ENCODE measurements at regions of chr1 and their contacts with region 1.

Region 1: GRCh38 chr1:45011837-45012638 is at the start of gene UROD:
- DNase-seq: peak; percentile 92 to 94
- ATAC-seq: peak; percentile 60 to 85
- H3K4me3 ChIP-seq: peak within 1 kb of the TSS; percentile 97
- H3K27ac ChIP-seq: peak within 1 kb of the TSS; percentile 67 to 93
- H3K4me1 ChIP-seq: peaks cover 8% of the 10 kb centered on the region; the same call in 2 of the 3 replicates
- CTCF ChIP-seq: no peak
- EP300 ChIP-seq: no peak
- POLR2A ChIP-seq: peak; percentile 42
- RAD21 ChIP-seq: no peak
- polyA plus RNA-seq, gene UROD: 59.0 and 74.5 TPM in 2 replicates

Region 2: GRCh38 chr1:44799770-44800584 is 212.1 kb before region 1 on chr1 and contains the start of gene PLK3:
- CTCF ChIA-PET with region 1: interaction called, 3 read pairs
- POLR2A ChIA-PET with region 1: interaction called, 11 read pairs
- DNase-seq: peak; percentile 79 to 96
- ATAC-seq: peak; percentile 88 to 91
- H3K4me3 ChIP-seq: peak within 1 kb of the TSS; percentile 98
- H3K27ac ChIP-seq: peak within 1 kb of the TSS; percentile 91 to 95
- H3K4me1 ChIP-seq: peaks cover 34% of the 10 kb centered on the region
- CTCF ChIP-seq: peak; percentile 64
- EP300 ChIP-seq: no peak
- POLR2A ChIP-seq: peak; percentile 85
- RAD21 ChIP-seq: peak; percentile 68 to 76
- polyA plus RNA-seq, gene PLK3: 12.6 and 16.0 TPM in 2 replicates

Region 3: DNA sequence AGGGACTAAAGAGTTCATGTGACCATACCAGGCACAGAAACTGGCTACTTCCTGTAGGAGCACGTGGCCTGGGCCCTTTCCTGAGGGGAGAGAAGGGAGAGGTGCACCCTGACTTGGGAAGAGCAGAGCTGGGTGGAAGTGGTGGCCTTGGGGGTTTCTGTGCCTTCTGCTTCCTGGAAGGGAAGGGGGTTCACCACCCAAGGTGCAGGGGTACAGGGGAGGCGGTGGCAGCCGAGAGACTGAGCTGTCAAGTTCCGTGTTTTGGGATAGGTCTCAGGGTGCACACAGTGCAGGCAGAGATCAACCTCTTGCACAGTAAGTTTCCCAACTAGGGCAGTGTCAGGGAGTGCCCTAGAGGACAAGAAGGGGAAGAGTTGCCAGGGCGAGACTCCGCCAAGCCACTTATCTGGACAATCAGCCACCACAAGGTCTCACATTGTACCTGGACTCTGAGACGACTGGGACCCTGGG is 11.0 kb before region 1 on chr1:
- CTCF ChIA-PET with region 1: interaction called, 23 read pairs
- POLR2A ChIA-PET with region 1: no interaction called
- DNase-seq: no peak
- ATAC-seq: peak; percentile 60 to 70; a peak in 4 of 6 replicates
- H3K4me3 ChIP-seq: no peak overlapping the region
- H3K27ac ChIP-seq: no peak overlapping the region
- H3K4me1 ChIP-seq: no peaks in the 10 kb centered on the region
- CTCF ChIP-seq: no peak
- EP300 ChIP-seq: no peak
- POLR2A ChIP-seq: no peak
- RAD21 ChIP-seq: no peak

Region 4: GRCh38 chr1:45319761-45320160 is 307.7 kb after region 1 on chr1:
- CTCF ChIA-PET with region 1: interaction called, 10 read pairs
- POLR2A ChIA-PET with region 1: no interaction called
- DNase-seq: no peak
- ATAC-seq: no peak
- H3K4me3 ChIP-seq: no peak overlapping the region
- H3K27ac ChIP-seq: no peak overlapping the region
- H3K4me1 ChIP-seq: no peaks in the 10 kb centered on the region
- CTCF ChIP-seq: no peak
- EP300 ChIP-seq: no peak
- POLR2A ChIP-seq: no peak
- RAD21 ChIP-seq: no peak

Region 5: GRCh38 chr1:45490626-45491486 is 478.8 kb after region 1 on chr1 and contains the start of gene TESK2:
- CTCF ChIA-PET with region 1: interaction called, 56 read pairs
- POLR2A ChIA-PET with region 1: interaction called, 4 read pairs
- DNase-seq: peak; percentile 93 to 99
- ATAC-seq: peak; percentile 92 to 97
- H3K4me3 ChIP-seq: peak within 1 kb of the TSS; percentile 57
- H3K27ac ChIP-seq: peak within 1 kb of the TSS; percentile 18 to 68; a peak in 4 of 6 replicates
- H3K4me1 ChIP-seq: no peaks in the 10 kb centered on the region; the same call in 2 of the 3 replicates
- CTCF ChIP-seq: no peak
- EP300 ChIP-seq: no peak
- POLR2A ChIP-seq: no peak
- RAD21 ChIP-seq: no peak
- polyA plus RNA-seq, gene TESK2: 0.48 and 0.58 TPM in 2 replicates

Measured in A549 (cell line).